Posterior cingulate gyrus (tissue), 11 donors: ENCODE measurements at regions of chr16 and their contacts with region 1.

Region 1: DNA sequence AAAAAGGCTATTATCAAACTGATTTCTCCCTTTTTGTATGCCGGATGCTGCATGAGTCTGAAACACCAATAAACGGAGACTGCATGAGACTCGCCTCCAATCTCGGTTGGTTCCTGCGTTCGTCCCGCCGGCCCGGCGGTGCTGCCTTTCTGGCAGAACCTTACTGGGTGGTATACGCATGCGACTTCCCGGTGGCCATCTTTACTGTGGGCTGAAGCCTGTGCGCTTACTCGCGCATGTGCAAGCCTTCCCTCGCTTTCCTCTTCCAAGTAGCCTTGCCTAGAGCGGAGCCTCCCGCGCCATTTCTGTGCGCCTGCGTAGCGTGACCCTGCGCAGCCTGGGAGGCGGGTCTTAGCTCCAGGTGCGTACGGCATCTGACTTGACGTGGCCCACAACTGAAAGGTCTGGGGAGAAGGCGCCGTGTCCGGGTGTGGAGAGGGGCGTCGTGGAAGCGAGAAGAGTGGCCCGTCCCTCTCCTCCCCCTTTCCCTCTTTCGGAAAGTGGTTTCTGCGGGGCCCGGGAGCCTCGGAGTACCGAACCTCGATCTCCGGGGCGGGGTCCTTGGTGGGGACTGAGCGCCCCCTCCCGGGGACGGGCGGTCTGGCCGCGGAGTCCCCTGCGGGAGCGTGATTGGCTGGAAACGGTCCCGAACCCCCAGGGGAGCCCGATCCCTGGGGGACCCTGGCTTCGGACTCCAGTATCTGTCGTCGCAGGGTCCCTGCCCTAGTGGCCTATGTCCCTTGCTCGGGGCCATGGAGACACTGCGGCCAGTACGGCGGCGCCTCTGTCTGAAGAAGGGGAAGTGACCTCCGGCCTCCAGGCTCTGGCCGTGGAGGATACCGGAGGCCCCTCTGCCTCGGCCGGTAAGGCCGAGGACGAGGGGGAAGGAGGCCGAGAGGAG is at the start of gene PAGR1:
- DNase-seq: peak; percentile 96 to 100 (median 98)

Region 2: DNA sequence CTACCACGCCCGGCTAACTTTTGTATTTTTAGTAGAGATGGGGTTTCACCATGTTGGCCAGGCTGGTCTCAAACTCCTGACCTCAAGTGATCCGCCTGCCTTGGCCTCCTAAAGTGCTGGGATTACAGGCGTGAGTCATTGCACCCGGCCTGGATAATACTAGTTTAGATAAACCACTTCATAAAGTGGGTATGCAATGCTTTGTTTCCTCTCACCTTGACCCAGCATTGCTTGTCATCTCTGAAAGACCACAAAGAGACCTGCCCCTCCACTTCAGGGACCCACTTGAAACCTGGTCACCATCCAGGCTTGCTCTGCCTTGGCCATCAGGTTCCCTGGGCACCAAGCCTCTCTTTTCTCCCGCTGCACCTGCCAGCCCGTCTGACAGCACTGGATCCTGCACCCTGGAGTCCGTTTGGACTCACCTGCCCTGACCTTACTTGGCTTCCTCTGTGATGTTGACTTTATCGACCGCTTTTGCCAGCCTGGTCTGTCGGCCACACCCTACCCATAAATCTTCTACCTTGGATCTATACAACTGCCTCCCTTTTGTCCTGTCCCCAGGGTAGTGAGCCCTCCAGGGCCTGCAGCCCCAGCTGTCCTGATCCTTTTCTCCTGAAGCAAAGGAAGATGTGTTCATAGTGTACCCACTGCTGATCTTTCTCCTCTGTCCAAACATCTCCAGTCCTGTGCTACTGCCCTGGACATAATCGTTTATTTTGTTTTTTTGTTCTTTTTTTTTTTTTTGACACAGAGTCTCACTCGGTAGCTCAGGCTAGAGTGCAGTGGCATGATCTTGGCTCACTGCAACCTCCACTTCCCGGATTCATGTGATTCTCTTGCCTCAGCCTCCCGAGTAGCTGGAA is 50.6 kb before region 1 on chr16:
- intact Hi-C with region 1: no loop called
- DNase-seq: no peak

Region 3: DNA sequence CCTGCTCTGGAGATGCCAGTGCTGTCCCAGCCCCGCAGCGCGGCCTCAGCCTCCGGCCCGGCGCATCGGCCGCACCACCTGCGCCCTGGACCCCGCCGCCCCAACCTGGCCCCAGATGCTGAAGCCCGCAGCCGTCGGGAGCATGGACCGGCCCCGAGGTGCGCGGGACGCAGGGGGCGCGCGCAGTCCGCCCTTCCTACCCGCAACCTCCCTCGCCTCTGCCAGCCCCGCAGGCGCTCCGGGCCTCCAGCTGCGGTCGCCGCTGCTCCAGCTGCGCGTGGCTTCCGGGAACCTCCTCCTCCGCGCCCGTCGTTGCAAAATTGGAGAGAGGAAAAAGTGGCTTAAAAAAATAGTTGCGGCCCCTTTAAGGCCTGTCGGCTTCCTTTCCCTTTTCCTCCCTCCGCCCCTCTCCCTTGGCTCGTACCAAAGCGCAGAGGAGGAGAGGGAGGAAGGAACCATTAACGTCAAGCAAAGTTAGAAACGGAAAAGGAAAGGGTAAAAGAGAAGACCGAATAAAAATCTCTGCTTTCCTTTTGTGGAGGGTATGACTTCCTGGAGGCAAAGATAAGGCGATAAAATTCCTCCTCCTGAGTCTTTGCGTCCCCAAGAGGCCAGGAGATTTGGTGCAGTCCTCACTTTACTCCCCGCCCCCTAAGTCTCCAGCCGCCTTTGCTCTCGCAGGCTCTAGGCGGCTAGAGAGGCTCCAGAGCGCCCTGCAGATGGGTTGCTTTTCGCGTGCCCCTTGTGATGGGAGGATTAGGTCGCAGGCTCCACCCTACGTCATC is 47.0 kb after region 1 on chr16 and contains the start of gene CDIPT:
- intact Hi-C with region 1: loop called (anchors 1 kb)
- DNase-seq: peak; percentile 89 to 100 (median 94)

Region 4: DNA sequence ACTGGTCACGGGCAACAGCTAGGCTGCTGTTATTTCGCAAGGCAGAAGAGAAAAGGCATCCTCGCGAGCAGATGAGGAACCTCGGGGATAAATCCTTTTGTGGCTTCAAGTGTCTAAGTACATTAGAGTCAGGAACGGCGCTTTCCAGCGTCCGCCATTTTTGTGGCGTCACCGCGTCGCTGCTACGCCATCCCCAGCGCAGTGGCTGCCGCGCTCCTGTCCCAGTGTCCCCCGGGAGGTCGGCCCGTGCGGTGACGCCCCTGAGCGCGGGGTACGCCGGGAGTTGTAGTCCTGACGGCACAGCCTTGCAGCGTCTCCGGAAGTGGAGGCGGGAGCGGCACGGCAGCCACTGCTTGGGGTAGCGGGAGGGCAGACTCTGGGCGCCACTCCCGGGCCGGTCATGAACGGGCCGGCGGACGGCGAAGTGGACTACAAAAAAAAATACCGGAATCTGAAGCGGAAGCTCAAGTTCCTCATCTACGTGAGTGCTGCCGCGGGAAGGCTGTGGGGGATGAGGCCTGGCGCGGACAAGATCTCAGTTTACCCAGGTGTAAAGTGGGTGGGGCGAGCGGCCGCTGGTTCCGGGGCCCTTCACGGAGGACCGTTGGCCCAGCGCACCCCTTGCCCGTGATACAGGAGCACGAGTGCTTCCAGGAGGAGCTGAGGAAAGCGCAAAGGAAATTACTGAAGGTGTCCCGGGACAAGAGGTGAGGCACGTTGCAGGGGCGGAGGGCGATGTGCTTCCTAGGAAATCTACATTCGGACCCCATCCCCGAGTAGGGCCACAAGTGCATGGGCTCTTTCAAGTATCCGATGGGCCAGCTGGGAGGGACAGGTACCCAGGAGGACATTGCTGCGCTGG is 180.1 kb after region 1 on chr16 and contains the start of gene INO80E:
- intact Hi-C with region 1: loop called (anchors 10 kb)
- DNase-seq: peak; percentile 99 to 100 (median 100)

Region 5: DNA sequence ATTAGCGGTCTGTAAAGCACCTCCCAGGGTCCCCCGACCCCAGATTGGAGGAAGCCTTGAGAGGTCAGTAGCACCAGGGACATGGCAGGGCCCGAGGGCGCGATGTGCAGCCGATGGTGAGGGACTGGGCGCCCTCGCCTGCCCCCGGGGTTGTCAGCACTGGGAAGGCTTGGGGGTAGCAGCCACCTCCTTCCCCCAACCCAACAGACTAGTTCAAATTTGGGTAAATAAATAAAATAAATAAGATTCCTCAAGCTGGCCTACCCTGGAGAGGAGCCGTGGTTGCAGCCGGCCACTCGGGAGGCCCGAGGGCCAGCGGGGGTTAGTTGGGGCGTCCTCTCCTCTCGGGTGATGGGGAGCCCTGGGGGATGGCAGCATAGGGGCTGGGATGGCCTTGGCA is 208.4 kb after region 1 on chr16:
- intact Hi-C with region 1: loop called (anchors 5 kb)
- DNase-seq: no peak

Region 6: DNA sequence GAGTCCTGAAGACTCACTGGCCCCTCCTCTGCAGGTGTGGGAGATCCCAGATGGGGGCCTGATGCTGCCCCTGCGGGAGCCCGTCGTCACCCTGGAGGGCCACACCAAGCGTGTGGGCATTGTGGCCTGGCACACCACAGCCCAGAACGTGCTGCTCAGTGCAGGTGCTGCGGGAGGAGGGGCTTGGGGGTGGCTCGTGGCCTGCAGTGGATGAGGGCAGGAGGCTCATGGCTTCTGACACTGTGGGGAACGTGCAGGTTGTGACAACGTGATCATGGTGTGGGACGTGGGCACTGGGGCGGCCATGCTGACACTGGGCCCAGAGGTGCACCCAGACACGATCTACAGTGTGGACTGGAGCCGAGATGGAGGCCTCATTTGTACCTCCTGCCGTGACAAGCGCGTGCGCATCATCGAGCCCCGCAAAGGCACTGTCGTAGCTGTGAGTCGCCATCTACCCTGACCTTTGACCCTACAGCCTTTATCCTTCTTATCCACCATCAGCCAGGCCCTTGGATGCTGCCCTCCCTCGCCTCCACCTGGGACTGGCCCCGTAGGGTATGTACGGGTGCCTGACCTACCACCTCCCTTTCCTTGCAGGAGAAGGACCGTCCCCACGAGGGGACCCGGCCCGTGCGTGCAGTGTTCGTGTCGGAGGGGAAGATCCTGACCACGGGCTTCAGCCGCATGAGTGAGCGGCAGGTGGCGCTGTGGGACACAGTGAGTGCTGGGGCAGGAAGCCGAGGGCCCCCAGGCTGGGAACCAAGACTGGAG is 370.9 kb after region 1 on chr16:
- intact Hi-C with region 1: no loop called
- DNase-seq: peak in 9 of 10 donors; percentile 15 to 89 (median 58)